ENCODE measurements at regions of chr10 and their contacts with region 1.

Region 1: GRCh38 chr10:97498076-97498840 is at the start of gene MMS19:
- DNase-seq: peak; percentile 100
- H3K4me3 ChIP-seq: peak within 1 kb of the TSS; percentile 69 to 92 (median 83)
- H3K27ac ChIP-seq: peak within 1 kb of the TSS; percentile 89 to 96 (median 94)
- H3K4me1 ChIP-seq: peaks cover 0 to 52% (median 40%) of the 10 kb centered on the region in 4 donors
- H3K27me3 ChIP-seq: no peaks in the 10 kb centered on the region
- CTCF ChIP-seq: no peak
- EP300 ChIP-seq: peak in 1 of 4 donors; percentile 37
- POLR2A ChIP-seq: peak; percentile 56 to 65
- total RNA-seq, gene MMS19: 37.9 to 79.8 (median 57.9) TPM

Region 2: DNA sequence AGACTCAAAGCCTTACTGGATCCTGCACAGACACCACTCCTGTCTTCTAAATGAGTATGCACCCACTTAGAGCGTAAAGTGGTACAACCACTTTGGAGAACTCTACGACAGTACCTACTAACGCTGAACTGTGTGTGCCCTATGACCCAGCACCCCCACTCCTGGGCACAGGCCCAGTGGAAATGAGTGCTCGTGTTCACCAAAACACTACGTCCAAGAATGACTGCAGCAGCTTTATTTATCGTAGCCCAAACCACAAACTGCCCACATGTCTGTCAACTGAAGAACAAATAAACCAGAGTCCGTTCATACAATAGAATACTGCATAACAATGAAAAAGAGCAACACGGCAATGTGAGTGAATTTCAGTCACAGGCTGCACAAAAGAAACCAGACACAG is 1019.9 kb before region 1 on chr10:
- intact Hi-C with region 1: no loop called
- DNase-seq: no peak
- H3K4me3 ChIP-seq: no peak overlapping the region
- H3K27ac ChIP-seq: no peak overlapping the region
- H3K4me1 ChIP-seq: no peaks in the 10 kb centered on the region
- H3K27me3 ChIP-seq: no peaks in the 10 kb centered on the region
- CTCF ChIP-seq: no peak
- EP300 ChIP-seq: no peak
- POLR2A ChIP-seq: no peak

Region 3: GRCh38 chr10:97425964-97426775 is 72.1 kb before region 1 on chr10 and contains the start of gene PGAM1:
- intact Hi-C with region 1: loop called (anchors 5 kb)
- DNase-seq: peak; percentile 98
- H3K4me3 ChIP-seq: peak within 1 kb of the TSS; percentile 84 to 96 (median 90)
- H3K27ac ChIP-seq: peak within 1 kb of the TSS; percentile 91 to 93 (median 92)
- H3K4me1 ChIP-seq: peaks cover 0 to 30% (median 29%) of the 10 kb centered on the region in 4 donors
- H3K27me3 ChIP-seq: no peaks in the 10 kb centered on the region
- CTCF ChIP-seq: peak in 1 of 4 experiments; percentile 35
- EP300 ChIP-seq: peak in 1 of 4 donors; percentile 48
- POLR2A ChIP-seq: peak; percentile 60
- total RNA-seq, gene PGAM1: 188 to 306 (median 224) TPM

Region 4: GRCh38 chr10:97445722-97446639 is 52.3 kb before region 1 on chr10 and contains the starts of genes EXOSC1 and ZDHHC16:
- intact Hi-C with region 1: loop called (anchors 5 kb)
- DNase-seq: peak; percentile 94
- H3K4me3 ChIP-seq: peak within 1 kb of the TSS; percentile 69 to 89 (median 77)
- H3K27ac ChIP-seq: peak within 1 kb of the TSS; percentile 77 to 83 (median 81)
- H3K4me1 ChIP-seq: peaks cover 0 to 35% (median 31%) of the 10 kb centered on the region in 4 donors
- H3K27me3 ChIP-seq: no peaks in the 10 kb centered on the region
- CTCF ChIP-seq: no peak
- EP300 ChIP-seq: no peak
- POLR2A ChIP-seq: peak in 1 of 2 donors; percentile 39
- total RNA-seq, gene EXOSC1: 29.1 to 40.0 (median 38.7) TPM
- total RNA-seq, gene ZDHHC16: 15.7 to 36.3 (median 24.0) TPM

Region 5: DNA sequence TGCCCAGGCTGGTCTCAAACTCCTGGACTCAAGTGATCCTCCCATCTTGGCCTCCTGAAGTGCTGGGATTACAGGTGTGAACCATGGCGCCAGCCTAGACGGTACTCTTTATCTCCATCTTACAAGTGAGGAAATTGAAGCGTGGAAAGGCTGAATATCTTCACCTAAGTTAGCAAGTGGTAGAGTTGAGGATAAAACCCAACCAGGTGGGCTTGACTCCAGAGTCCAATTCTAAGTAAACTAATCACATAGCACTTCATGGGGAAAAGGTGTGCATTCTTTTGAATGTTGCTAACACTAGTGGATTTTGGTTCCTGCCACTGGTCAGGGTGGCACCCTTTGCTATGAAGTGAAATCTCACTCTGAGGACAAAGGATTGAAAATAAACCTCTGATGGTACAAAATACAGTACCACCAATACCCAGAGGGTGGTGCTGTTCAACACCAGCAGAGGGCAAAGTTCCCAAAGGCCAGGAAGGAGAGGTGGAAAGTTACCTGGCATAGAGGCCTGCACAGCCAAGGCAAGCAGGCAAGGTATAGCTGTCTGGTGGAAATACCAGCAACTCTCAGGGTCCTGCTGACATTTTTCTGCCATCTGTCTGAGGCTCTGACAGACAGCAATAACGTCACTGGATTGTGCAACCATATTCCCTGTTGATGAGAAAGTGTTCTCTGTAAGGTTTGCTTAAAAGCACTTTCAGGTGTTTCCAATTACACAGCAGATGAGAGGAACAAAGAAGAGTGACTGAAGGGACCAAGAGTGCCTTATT is 34.7 kb before region 1 on chr10:
- intact Hi-C with region 1: loop called (anchors 5 kb)
- DNase-seq: no peak
- H3K4me3 ChIP-seq: no peak overlapping the region
- H3K27ac ChIP-seq: peak overlapping the region in 2 of 4 donors; percentile 26 to 35
- H3K4me1 ChIP-seq: no peaks in the 10 kb centered on the region
- H3K27me3 ChIP-seq: no peaks in the 10 kb centered on the region
- CTCF ChIP-seq: peak; percentile 57 to 86 (median 78)
- EP300 ChIP-seq: no peak
- POLR2A ChIP-seq: no peak

Region 6: GRCh38 chr10:97553575-97554031 is 55.3 kb after region 1 on chr10:
- intact Hi-C with region 1: loop called (anchors 1 kb)
- DNase-seq: peak; percentile 82
- H3K4me3 ChIP-seq: no peak overlapping the region
- H3K27ac ChIP-seq: no peak overlapping the region
- H3K4me1 ChIP-seq: peaks cover 0 to 21% (median 11%) of the 10 kb centered on the region in 4 donors
- H3K27me3 ChIP-seq: no peaks in the 10 kb centered on the region
- CTCF ChIP-seq: peak; percentile 75 to 90 (median 78)
- EP300 ChIP-seq: no peak
- POLR2A ChIP-seq: no peak

Region 7: GRCh38 chr10:97632949-97633884 is 135.0 kb after region 1 on chr10 and contains the start of gene MORN4:
- intact Hi-C with region 1: loop called (anchors 5 kb)
- DNase-seq: peak; percentile 97
- H3K4me3 ChIP-seq: peak within 1 kb of the TSS; percentile 59 to 90 (median 74)
- H3K27ac ChIP-seq: peak within 1 kb of the TSS; percentile 64 to 81 (median 74)
- H3K4me1 ChIP-seq: peaks cover 0 to 14% (median 7%) of the 10 kb centered on the region in 4 donors
- H3K27me3 ChIP-seq: no peaks in the 10 kb centered on the region
- CTCF ChIP-seq: no peak
- EP300 ChIP-seq: no peak
- POLR2A ChIP-seq: no peak
- total RNA-seq, gene MORN4: 0.83 to 23.4 (median 5.4) TPM

Region 8: DNA sequence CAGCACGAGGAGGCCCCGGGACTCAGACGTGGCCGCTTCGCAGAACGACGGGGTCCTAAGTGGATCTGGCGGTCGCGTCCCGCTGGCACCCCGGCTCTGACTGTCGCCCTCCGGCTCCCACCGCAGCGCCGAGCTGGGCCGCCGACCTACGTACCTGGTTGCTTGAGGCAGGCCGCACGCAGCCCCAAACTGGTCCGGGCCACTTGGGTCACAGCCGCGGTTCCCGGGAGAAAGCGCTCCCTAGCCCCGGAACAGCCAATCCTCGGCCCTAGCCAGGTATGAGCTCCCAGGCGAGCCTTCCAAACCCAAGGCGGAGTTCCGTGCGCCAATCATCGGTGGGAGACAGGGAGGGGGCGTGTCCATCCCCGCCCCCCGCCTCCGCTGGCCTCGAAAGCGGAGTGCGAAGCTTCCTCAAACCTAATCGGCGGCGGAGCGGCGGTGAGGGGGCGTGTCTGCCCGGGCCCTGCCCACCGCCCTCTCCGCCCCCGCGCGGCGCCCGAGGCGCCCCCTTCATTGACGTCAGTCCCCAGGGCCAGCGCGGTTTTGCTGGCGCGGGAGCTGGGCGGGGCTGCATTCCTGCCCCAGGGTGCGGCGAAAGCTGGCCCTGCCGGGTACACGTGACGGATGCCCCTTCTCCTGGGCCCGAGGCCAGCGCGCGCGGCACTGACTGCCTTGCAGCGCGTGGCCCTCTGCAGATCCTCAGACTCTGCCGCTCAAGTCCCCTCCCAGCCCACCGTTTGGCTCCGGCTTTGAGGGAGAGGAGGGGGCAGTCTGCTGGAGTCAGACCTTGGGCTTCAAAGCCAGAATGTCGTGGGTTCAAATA is 188.9 kb after region 1 on chr10 and contains the start of gene AVPI1:
- intact Hi-C with region 1: loop called (anchors 2 kb)
- DNase-seq: peak; percentile 99
- H3K4me3 ChIP-seq: peak within 1 kb of the TSS; percentile 67 to 76 (median 72)
- H3K27ac ChIP-seq: peak within 1 kb of the TSS; percentile 91 to 92 (median 92)
- H3K4me1 ChIP-seq: peaks cover 0 to 57% (median 53%) of the 10 kb centered on the region in 4 donors
- H3K27me3 ChIP-seq: no peaks in the 10 kb centered on the region
- CTCF ChIP-seq: no peak
- EP300 ChIP-seq: peak; percentile 75 to 95 (median 90)
- POLR2A ChIP-seq: peak; percentile 96 to 98
- total RNA-seq, gene AVPI1: 10.5 to 16.1 (median 12.2) TPM

Measured in sigmoid colon (tissue), 7 donors.